ENCODE measurements at regions of chr11 and their contacts with region 1.

Region 1: GRCh38 chr11:31487848-31488247 is 21.6 kb downstream of the IMMP1L start:
- DNase-seq: peak; percentile 15
- H3K4me3 Mint-ChIP-seq: no peak overlapping the region
- H3K27ac Mint-ChIP-seq: no peak overlapping the region
- H3K4me1 Mint-ChIP-seq: no peaks in the 10 kb centered on the region
- H3K27me3 Mint-ChIP-seq: no peaks in the 10 kb centered on the region
- CTCF ChIP-seq: peak; percentile 35

Region 2: DNA sequence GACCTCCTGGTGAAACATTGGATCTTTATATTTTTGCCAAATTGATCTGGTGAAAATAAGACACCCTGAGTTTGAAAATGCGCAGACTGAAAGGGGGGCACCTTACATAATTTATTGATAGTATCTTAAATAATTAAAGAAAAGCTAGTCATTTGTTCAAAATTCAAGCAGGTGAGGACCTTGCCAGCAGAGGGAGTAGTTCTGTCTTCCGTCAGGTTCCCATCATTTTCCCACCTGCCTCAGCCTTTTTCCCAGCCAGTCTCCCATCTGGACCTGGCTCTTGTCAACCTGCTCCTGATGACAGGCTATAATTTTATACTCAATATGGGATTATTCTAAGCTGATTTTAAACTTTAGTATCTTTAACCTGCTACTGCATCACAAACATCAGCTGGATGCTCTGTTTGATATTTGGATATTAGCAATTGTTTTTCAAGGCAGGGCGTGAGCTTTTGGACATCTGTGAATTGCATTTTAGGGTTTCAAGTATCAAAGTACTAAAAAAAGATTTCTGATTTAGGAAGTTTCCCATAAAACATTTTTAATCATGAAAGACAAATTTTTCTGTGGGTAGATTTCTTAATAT is 153.7 kb after region 1 on chr11:
- CTCF ChIA-PET with region 1: no interaction called
- intact Hi-C with region 1: loop called (anchors 2 kb)
- DNase-seq: peak; percentile 55
- H3K4me3 Mint-ChIP-seq: no peak overlapping the region
- H3K27ac Mint-ChIP-seq: no peak overlapping the region
- H3K4me1 Mint-ChIP-seq: no peaks in the 10 kb centered on the region
- H3K27me3 Mint-ChIP-seq: no peaks in the 10 kb centered on the region
- CTCF ChIP-seq: peak; percentile 56

Region 3: DNA sequence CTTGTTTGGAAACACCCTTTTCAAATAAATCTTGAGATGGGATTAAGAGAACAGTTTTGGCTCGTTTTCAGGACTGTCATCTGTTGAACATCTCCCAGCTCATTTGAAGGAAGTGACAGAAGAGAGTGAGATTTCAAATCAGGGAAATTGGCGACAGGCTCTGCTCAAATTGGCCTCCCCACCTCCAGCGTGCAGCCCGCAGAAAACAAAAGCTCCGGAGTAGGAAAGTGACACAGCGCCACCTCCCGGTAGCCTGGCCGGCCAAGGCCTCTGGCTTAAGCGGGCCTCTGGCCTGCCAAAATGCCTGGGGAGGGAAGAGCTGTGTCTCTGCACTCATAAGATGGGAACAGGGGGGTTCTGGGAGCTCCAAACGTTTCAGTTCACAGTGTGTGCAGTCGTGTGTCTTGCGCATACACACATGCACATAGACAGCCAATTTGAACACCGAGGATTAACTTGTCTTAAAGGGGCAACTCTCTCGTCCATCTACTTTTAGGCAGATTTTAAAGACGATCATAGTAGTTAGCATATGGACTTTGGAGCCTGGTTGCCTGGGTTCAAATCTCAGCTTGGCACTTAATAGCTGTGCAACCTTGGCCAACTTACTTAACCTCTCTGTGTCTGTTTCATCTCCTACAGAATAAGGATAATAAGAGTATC is 470.4 kb after region 1 on chr11:
- CTCF ChIA-PET with region 1: no interaction called
- intact Hi-C with region 1: loop called (anchors 10 kb)
- DNase-seq: peak; percentile 73
- H3K4me3 Mint-ChIP-seq: no peak overlapping the region
- H3K27ac Mint-ChIP-seq: no peak overlapping the region
- H3K4me1 Mint-ChIP-seq: no peaks in the 10 kb centered on the region
- H3K27me3 Mint-ChIP-seq: peaks cover 42% of the 10 kb centered on the region
- CTCF ChIP-seq: peak; percentile 69

Region 4: GRCh38 chr11:32006799-32007388 is 519.0 kb after region 1 on chr11:
- CTCF ChIA-PET with region 1: no interaction called
- intact Hi-C with region 1: loop called (anchors 5 kb)
- DNase-seq: peak; percentile 30
- H3K4me3 Mint-ChIP-seq: no peak overlapping the region
- H3K27ac Mint-ChIP-seq: no peak overlapping the region
- H3K4me1 Mint-ChIP-seq: no peaks in the 10 kb centered on the region
- H3K27me3 Mint-ChIP-seq: peaks cover 90% of the 10 kb centered on the region
- CTCF ChIP-seq: peak; percentile 44